ENCODE measurements at regions of chr1 and their contacts with region 1.

Region 1: DNA sequence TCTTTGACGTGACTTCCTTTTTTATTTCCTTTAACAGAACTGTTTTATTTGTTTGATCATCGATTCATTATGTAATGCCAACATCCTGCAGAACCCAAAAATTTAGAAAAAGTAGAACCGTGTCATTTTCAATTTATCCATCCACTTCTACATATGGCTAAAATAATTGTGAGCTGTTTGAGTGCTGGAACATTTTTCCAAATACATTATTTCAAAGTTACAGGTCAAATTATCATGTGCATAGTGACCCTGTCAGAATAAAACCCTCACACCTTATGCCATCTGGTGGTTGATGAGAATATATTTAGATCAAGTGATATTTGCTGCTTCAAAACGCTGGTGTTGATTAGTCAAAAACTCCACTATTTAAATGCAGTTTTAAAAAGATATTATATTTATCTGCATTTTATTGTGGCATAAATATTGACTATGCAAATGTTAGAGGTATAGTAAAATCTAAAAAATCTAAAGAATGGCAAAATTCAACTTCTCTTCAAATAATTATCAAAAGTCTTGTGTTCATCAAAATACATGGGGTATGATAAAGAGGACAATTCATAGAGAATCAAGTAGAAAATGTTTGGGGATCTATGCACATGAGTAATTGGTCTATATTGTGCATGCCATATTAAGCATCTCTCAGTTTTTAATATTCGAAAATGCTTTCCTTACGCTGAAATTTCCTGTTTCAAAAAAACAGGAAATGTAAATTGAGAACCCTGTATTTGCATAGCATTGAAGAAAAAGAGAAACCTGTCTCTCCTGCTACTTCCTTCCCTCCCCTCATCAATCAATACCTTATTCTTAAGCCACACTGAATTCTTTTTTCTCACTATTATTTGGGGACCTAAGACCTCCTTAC is 39.7 kb downstream of the UBE2U start:
- DNase-seq: no peak
- ATAC-seq: peak; percentile 47

Region 2: GRCh38 chr1:63615768-63616420 is 627.2 kb before region 1 on chr1:
- intact Hi-C with region 1: loop called (anchors 5 kb)
- DNase-seq: no peak
- ATAC-seq: peak; percentile 57

Region 3: GRCh38 chr1:63674865-63675419 is 568.2 kb before region 1 on chr1:
- intact Hi-C with region 1: loop called (anchors 5 kb)
- DNase-seq: no peak
- ATAC-seq: peak; percentile 14

Region 4: GRCh38 chr1:64440183-64440826 is 197.2 kb after region 1 on chr1:
- intact Hi-C with region 1: no loop called
- DNase-seq: no peak
- ATAC-seq: peak; percentile 56

Measured in left ventricle myocardium superior (tissue), 1 donor.